Caco-2 (cell line): ENCODE measurements at regions of chr2 and their contacts with region 1.

Region 1: GRCh38 chr2:42895134-42895790 is 102.9 kb upstream of the HAAO start:
- DNase-seq: no peak
- H3K4me3 ChIP-seq: no peak overlapping the region
- H3K4me3 Mint-ChIP-seq: no peak overlapping the region
- H3K27ac Mint-ChIP-seq: no peak overlapping the region
- H3K4me1 ChIP-seq: peaks cover 7% of the 10 kb centered on the region; the same call in 1 of the 2 replicates
- H3K4me1 Mint-ChIP-seq: peaks cover 5% of the 10 kb centered on the region
- H3K27me3 ChIP-seq: no peaks in the 10 kb centered on the region
- H3K27me3 Mint-ChIP-seq: no peaks in the 10 kb centered on the region
- CTCF ChIP-seq: no peak

Region 2: DNA sequence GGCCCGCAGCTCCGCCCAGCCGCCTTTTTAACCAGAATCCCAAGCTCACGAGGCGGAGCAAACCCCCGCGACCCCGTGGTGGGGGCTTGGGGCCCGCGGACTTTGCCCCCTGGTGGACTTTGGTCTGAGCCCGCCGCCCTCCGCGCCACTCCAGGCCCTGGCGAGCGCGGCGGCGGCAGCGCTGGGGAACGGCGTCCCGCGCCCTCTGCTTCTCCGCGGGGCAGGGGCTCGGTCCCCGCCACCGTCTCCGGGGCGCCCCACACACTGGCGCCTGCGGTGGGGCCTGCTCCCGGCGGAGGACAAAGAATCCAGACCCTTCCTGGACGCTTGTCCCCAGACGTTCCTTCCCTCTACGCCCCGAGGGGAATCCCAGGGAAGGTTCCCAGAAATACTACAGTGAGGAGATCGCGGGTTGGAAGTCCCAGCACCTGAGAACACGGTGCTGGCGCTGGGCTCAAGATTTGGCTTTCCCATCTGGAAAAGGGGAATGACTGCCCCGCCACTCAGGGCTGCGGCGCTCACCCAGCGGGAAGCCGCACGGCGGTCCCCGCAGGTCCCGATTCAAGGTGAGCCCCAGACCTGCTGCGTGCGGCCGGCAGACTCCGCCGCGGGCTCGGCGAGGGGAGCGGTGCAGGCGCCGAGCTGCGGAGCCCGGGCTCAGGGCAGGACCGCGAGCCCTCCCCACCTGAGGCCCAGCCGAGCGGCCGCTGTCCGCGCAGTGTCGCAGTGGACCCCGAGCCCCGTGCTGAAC is 102.5 kb before region 1 on chr2 and contains the start of gene HAAO:
- CTCF ChIA-PET with region 1: no interaction called
- POLR2A ChIA-PET with region 1: no interaction called
- intact Hi-C with region 1: no loop called
- DNase-seq: peak; percentile 91 to 95
- H3K4me3 ChIP-seq: peak within 1 kb of the TSS; percentile 87
- H3K4me3 Mint-ChIP-seq: peak within 1 kb of the TSS; percentile 79
- H3K27ac Mint-ChIP-seq: peak within 1 kb of the TSS; percentile 82
- H3K4me1 ChIP-seq: peaks cover 12% of the 10 kb centered on the region
- H3K4me1 Mint-ChIP-seq: peaks cover 46% of the 10 kb centered on the region
- H3K27me3 ChIP-seq: no peaks in the 10 kb centered on the region
- H3K27me3 Mint-ChIP-seq: no peaks in the 10 kb centered on the region
- CTCF ChIP-seq: no peak
- total RNA-seq, gene HAAO: 44.1 and 47.5 TPM in 2 replicates

Region 3: DNA sequence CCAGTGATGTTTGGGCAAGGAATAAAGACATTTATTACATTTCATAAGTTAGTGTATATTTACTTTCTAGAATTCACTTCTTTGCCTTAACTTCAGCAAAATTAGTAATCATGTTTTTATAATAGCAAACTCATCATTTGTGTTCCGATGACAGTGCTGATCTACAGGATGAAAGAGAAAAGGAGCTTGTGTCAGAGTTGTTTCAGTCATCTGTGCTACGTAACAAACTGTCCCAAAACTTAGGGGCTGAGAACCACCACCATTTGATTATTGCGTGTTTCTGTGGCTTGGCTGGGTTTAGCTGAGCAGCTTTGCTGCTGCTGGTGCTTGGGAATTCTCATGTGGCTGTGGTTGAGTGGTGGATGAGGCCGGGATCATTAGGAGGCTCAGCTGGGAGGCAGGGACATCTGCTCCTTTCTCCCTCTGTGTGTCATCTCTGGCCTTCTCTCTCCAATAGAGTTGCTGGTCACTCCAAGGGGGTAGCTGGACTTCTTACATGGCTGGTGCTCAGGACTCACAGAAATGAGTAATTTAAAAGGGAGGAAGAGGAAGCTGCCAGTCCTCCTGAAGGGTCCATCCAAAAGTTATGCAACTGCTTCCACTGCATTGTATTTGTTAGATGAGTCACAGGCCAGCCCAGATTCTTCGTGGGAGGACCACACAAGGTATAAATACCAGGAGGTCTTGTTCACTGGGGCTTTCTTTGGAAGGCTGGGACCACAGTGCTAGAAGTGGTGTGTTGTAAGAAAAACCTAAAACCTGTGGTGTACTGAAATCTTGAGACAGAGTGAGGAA is 59.5 kb before region 1 on chr2:
- CTCF ChIA-PET with region 1: no interaction called
- POLR2A ChIA-PET with region 1: no interaction called
- intact Hi-C with region 1: no loop called
- DNase-seq: peak in 1 of 2 experiments; percentile 48
- H3K4me3 ChIP-seq: no peak overlapping the region
- H3K4me3 Mint-ChIP-seq: no peak overlapping the region
- H3K27ac Mint-ChIP-seq: peak overlapping the region; percentile 67
- H3K4me1 ChIP-seq: peaks cover 7% of the 10 kb centered on the region
- H3K4me1 Mint-ChIP-seq: peaks cover 7% of the 10 kb centered on the region
- H3K27me3 ChIP-seq: no peaks in the 10 kb centered on the region
- H3K27me3 Mint-ChIP-seq: no peaks in the 10 kb centered on the region
- CTCF ChIP-seq: no peak

Region 4: DNA sequence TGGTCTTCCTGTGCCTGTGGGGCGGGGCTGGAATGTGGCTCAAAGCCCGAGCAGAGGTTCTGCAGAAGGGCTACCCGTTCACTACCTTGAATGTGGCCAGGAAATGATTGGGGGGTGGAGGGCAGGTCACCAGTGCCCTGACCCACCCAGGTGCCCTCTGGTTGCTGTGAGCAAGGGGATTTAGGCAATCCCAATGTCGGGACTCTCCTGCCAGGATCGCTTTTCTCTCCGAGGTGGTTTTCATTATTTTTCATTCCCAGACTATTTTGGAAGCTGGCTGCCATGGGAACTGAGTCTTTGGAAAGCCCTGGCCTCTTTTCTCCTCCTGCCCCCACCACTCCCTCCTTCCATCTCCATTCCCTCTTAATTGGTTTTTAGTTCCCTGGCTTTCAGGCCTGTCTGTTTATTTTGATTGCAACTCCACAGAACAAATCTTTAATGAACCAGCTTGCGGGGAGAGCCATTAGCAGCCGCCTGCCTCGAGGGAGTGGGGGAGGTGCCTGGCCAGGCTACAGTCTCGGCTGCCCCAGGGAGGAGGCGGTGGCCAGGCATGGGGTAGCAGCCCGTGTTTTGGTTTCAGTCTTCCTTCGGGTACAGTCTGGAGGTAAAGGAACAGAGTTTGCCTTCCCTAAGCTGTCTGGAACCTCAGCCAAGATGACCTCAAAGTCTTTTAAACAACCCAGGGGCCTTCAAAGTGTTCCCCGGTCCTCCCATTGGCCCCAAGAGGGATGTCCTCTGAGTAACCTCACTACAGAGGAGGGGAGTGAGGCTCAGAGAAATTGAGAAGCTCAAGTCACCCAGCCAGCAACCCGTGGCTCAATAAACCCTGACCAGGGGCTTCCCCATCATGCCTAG is 11.5 kb after region 1 on chr2:
- CTCF ChIA-PET with region 1: no interaction called
- POLR2A ChIA-PET with region 1: no interaction called
- intact Hi-C with region 1: no loop called
- DNase-seq: no peak
- H3K4me3 ChIP-seq: no peak overlapping the region
- H3K4me3 Mint-ChIP-seq: no peak overlapping the region
- H3K27ac Mint-ChIP-seq: peak overlapping the region; percentile 12
- H3K4me1 ChIP-seq: peaks cover 10% of the 10 kb centered on the region
- H3K4me1 Mint-ChIP-seq: peaks cover 13% of the 10 kb centered on the region
- H3K27me3 ChIP-seq: no peaks in the 10 kb centered on the region
- H3K27me3 Mint-ChIP-seq: no peaks in the 10 kb centered on the region
- CTCF ChIP-seq: no peak

Region 5: GRCh38 chr2:42935692-42936681 is 40.7 kb after region 1 on chr2:
- CTCF ChIA-PET with region 1: no interaction called
- POLR2A ChIA-PET with region 1: no interaction called
- intact Hi-C with region 1: loop called (anchors 5 kb)
- DNase-seq: no peak
- H3K4me3 ChIP-seq: no peak overlapping the region
- H3K4me3 Mint-ChIP-seq: no peak overlapping the region
- H3K27ac Mint-ChIP-seq: no peak overlapping the region
- H3K4me1 ChIP-seq: peaks cover 5% of the 10 kb centered on the region; the same call in 1 of the 2 replicates
- H3K4me1 Mint-ChIP-seq: no peaks in the 10 kb centered on the region
- H3K27me3 ChIP-seq: no peaks in the 10 kb centered on the region
- H3K27me3 Mint-ChIP-seq: no peaks in the 10 kb centered on the region
- CTCF ChIP-seq: no peak